AG04449 (cell line): ENCODE measurements at regions of chr12 and their contacts with region 1.

Region 1: GRCh38 chr12:68223083-68223747 is 2.4 kb downstream of the IL26 start:
- DNase-seq: peak; percentile 47
- H3K4me3 ChIP-seq: no peak overlapping the region; the same call in 1 of the 2 replicates
- CTCF ChIP-seq: peak; percentile 80

Region 2: DNA sequence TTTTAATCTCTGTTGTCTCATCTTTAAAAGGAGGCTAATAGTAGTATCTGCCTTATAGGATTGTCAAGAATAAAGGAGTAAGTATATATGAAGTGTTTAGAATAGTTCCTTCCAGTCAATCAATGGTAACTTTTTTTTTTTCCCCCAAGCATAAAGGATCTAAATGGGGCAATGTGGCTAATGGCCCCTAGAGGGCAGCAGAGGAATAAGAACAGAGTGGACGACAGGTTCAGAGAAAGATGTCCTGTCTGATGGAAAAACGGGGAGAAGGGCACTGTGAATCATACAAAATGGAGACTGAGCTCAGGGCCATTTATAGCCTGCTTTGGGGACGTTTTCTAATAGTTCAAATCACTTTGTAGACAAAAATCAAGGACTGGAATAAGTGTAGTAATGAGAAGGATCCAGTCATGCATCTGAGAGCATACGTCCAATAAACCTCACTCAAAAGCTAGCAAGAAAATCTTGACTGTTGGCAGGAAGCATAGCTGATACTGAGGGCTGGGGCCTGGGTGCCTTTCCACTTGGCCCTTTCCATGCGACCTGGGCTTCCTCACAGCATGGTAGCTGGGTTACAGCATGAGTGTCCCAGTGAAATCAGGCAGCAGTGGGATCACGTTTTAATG is 182.7 kb before region 1 on chr12:
- CTCF ChIA-PET with region 1: interaction called, 12 read pairs
- POLR2A ChIA-PET with region 1: no interaction called
- DNase-seq: peak; percentile 23
- H3K4me3 ChIP-seq: no peak overlapping the region
- CTCF ChIP-seq: peak; percentile 63

Region 3: DNA sequence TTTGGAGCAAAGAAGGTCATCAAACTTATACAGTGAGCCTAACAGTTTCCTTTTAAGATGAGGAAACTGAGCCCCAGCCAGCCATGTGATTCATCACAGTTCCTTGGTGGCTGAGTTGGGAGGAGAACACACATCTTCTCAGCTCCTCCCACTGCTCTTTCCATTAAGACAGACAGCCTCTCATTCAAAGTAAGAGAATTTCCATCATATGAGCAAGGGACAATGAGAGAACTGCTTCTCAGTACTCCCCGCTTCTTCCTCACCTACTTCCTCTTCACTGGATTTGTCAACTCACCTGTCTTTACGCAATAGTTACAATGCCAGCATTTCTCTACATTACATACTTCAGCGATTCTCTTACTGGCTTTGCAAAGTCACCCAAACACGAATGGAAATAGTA is 65.8 kb before region 1 on chr12:
- CTCF ChIA-PET with region 1: no interaction called
- POLR2A ChIA-PET with region 1: no interaction called
- DNase-seq: no peak
- H3K4me3 ChIP-seq: no peak overlapping the region
- CTCF ChIP-seq: no peak

Region 4: DNA sequence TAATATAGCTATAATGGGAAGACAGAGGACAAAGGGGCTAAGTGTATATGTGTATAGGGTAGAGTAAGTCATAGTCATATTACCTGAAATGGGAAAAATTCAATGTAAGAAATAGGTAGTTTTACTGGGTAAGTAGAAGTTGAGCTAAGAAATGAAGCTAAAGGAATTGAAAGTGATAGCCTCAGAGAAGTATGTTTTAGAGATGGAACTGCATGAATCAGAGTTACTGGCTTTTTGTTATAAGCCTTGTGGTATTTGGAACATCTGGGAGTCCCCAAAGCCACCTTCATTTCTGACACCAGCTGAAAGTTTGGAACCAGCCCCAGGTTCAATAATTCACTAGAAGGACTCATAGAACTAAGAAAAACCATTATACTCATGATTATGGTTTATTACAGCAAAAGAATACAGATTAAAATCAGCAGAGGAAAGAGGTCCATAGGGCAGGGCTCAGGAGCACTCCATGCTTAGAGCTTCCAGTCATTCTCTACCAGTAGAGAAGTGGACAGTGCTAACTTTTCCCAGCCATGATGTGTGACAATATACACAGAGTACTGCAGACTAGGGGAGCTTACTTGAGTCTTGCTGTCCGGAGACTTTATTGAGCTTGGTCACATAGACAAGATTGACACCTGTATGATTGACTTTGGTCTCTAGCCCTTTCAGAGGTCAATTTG is 53.9 kb before region 1 on chr12:
- CTCF ChIA-PET with region 1: no interaction called
- POLR2A ChIA-PET with region 1: no interaction called
- DNase-seq: no peak
- H3K4me3 ChIP-seq: no peak overlapping the region
- CTCF ChIP-seq: no peak

Region 5: GRCh38 chr12:68261896-68262295 is 38.7 kb after region 1 on chr12:
- CTCF ChIA-PET with region 1: interaction called, 15 read pairs
- POLR2A ChIA-PET with region 1: no interaction called
- DNase-seq: no peak
- H3K4me3 ChIP-seq: no peak overlapping the region
- CTCF ChIP-seq: no peak

Region 6: DNA sequence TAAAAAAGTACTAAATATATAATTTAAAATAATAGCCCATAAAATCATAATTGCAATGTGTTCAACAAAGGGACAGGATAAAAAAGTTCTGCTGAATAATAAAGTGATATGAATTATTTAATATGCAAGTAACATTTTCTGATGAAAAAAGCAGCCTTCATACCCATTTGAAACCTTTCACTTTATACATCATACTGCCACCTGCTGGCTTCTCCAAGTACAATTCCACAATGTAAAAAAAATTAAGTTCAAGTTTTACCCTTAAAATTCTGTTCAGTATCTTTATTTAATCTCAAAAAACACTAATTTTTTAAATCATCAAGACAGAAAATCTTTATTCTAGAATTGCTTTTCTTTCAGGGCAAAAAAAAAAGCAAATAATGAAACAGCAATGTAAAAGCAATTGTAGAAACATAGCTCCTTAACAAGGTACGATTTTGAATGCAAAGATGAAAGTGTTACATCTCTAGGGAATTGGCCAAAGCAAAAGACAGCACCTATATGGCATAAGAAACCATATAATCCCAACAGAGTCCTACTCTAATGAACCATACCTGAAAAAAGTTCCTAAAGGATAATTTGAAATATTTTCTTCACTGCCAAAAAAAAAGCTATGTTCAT is 93.9 kb after region 1 on chr12:
- CTCF ChIA-PET with region 1: interaction called, 212 read pairs
- POLR2A ChIA-PET with region 1: no interaction called
- DNase-seq: no peak
- H3K4me3 ChIP-seq: no peak overlapping the region
- CTCF ChIP-seq: peak; percentile 33

Region 7: GRCh38 chr12:68331869-68332727 is 108.9 kb after region 1 on chr12 and contains the start of gene MDM1:
- CTCF ChIA-PET with region 1: interaction called, 42 read pairs
- POLR2A ChIA-PET with region 1: no interaction called
- DNase-seq: peak; percentile 84
- H3K4me3 ChIP-seq: peak within 1 kb of the TSS; percentile 74
- CTCF ChIP-seq: no peak